SK-N-SH (cell line): ENCODE measurements at regions of chr12 and their contacts with region 1.

Region 1: GRCh38 chr12:12327802-12328201 is 22.2 kb downstream of the MANSC1 start:
- DNase-seq: peak; percentile 64
- H3K4me3 ChIP-seq: no peak overlapping the region; a peak in 1 of 4 replicates
- H3K27ac ChIP-seq: no peak overlapping the region
- H3K4me1 ChIP-seq: peaks cover 0 to 5% of the 10 kb centered on the region in 2 experiments; a peak in 2 of 4 replicates
- H3K27me3 ChIP-seq: no peaks in the 10 kb centered on the region
- CTCF ChIP-seq: peak; percentile 84
- EP300 ChIP-seq: no peak
- RAD21 ChIP-seq: peak; percentile 91

Region 2: DNA sequence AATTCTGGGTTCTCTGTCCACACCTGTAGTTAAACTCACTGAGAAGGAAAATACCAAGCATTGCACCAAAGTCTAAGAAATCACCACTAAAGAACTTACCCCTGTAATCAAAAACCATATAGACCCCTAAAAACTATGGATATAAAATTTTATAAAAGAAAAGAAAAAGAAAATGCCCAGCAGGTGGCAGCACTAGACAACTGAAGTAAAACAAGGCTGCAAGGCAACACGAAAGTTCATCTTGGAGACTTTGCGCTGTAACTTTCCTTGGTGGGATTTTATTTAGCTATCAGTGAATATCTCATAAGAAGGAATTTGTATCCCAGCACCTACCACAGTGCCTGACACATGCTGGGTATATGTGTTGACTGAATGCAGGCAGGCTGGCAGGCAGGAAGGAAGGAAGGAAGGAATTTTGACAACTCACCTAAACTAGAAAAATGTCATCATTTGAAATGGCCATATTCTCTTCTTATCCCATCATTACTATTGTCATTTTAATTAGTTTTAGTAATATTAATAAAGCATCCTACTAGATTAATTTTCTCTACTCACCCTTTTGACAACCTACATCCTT is 746.5 kb before region 1 on chr12:
- CTCF ChIA-PET with region 1: interaction called, 19 read pairs
- POLR2A ChIA-PET with region 1: no interaction called
- DNase-seq: peak; percentile 51
- H3K4me3 ChIP-seq: no peak overlapping the region; a peak in 1 of 4 replicates
- H3K27ac ChIP-seq: no peak overlapping the region
- H3K4me1 ChIP-seq: peaks cover 0 to 13% of the 10 kb centered on the region in 2 experiments; a peak in 1 of 4 replicates
- H3K27me3 ChIP-seq: no peaks in the 10 kb centered on the region
- CTCF ChIP-seq: peak; percentile 67
- EP300 ChIP-seq: no peak
- RAD21 ChIP-seq: peak; percentile 95

Region 3: DNA sequence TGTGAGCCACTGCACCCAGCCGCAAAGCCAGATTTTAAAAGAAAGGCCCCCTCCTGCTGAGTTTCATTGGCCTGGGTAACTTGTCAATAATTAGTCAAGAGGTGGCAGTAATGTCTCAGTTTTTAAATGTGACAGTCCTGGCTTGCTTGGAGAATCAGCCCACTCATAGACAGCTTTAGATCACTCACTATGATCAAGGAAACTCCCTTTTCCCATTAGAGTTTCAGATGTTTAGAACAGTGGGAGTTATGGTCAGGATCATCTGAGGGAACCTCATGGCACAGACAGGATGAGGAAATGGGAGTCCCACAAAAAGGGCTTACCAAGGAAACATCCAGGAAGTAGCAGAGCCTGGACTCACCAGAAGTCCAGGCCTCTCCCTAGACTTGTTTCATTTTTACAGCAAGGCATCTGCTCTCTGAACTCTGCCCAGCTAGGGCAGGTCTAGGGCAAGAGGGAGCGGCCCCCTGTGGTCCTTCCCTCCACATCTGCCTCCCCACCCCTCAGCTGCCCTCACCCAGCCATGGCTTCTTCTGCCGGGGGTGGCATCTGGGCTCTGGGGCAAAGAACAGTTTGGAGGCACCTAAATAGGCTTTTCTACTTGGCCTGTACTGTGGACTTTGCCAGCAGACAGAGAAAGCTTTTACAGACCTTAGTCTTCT is 245.8 kb before region 1 on chr12:
- CTCF ChIA-PET with region 1: interaction called, 107 read pairs
- POLR2A ChIA-PET with region 1: no interaction called
- DNase-seq: peak; percentile 67
- H3K4me3 ChIP-seq: no peak overlapping the region
- H3K27ac ChIP-seq: peak overlapping the region in 1 of 2 experiments; percentile 39; a peak in 2 of 4 replicates
- H3K4me1 ChIP-seq: peaks cover 4 to 5% of the 10 kb centered on the region in 2 experiments; a peak in 3 of 4 replicates
- H3K27me3 ChIP-seq: no peaks in the 10 kb centered on the region
- CTCF ChIP-seq: peak; percentile 54
- EP300 ChIP-seq: no peak
- RAD21 ChIP-seq: peak; percentile 80

Region 4: GRCh38 chr12:12099102-12099501 is 228.7 kb before region 1 on chr12:
- CTCF ChIA-PET with region 1: interaction called, 11 read pairs
- POLR2A ChIA-PET with region 1: no interaction called
- DNase-seq: peak; percentile 73
- H3K4me3 ChIP-seq: no peak overlapping the region
- H3K27ac ChIP-seq: peak overlapping the region in 1 of 2 experiments; percentile 98; a peak in 3 of 4 replicates
- H3K4me1 ChIP-seq: peaks cover 0 to 25% of the 10 kb centered on the region in 2 experiments; a peak in 2 of 4 replicates
- H3K27me3 ChIP-seq: no peaks in the 10 kb centered on the region
- CTCF ChIP-seq: no peak
- EP300 ChIP-seq: peak in 1 of 2 experiments; percentile 94; a peak in 2 of 4 replicates
- RAD21 ChIP-seq: no peak; the same call in 1 of the 2 replicates